ENCODE measurements at regions of chr2 and their contacts with region 1.

Region 1: DNA sequence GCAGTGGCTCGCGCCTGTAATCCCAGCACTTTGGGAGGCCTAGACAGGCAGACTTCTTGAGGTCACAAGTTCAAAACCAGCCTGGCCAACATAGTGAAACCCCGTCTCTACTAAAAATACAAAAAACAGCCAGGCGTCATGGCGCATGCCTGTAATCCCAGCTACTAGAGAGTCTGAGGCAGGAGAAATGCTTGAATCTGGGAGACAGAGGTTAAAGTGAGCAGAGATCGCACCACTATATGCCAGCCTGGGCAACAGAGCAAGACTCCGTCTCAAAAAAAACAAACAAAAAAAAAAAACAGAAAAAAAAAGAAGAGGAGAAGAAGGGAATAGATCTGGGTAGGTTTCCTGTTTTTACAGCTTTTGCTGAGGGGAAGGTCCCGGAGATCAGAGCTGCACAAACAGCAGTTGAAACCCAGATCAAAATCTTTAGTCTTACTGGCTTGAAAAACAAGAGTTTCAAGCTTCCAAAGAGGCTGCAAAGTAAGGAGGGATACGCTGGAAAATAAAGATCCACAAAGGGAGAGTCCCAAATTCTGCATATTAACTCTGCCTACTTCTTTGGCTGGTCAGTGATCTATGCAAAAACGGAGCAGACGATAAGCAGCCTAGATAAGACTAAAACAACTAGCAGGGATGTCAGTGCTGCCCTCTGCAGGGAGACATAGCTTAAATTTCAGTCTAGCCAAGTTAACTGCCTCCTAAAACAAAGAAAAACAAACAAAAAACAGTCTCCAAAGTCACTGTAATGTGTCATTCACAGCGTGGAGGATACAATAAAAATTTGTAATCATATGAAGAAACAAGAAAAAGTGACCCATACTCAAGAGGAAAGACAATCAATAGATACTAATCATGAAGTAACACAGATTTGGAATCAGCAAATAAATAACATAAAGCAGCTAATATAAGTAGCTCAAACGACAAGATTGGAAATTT is 74.1 kb downstream of the TLK1 start:
- DNase-seq: peak; percentile 47 to 71 (median 56)
- H3K4me3 ChIP-seq: peak overlapping the region in 1 of 2 donors; percentile 19
- H3K4me3 Mint-ChIP-seq: peak overlapping the region; percentile 74 to 90 (median 84)
- H3K27ac ChIP-seq: peak overlapping the region; percentile 30
- H3K27ac Mint-ChIP-seq: peak overlapping the region; percentile 80 to 95 (median 90)
- H3K4me1 ChIP-seq: peaks cover 72% of the 10 kb centered on the region
- H3K4me1 Mint-ChIP-seq: peaks cover 48 to 78% (median 65%) of the 10 kb centered on the region in 4 donors
- H3K27me3 ChIP-seq: no peaks in the 10 kb centered on the region
- H3K27me3 Mint-ChIP-seq: no peaks in the 10 kb centered on the region

Region 2: GRCh38 chr2:170991399-170992182 is 95.0 kb before region 1 on chr2:
- CTCF ChIA-PET with region 1: interaction called, 3 read pairs
- POLR2A ChIA-PET with region 1: no interaction called
- intact Hi-C with region 1: loop called (anchors 5 kb)
- DNase-seq: no peak
- H3K4me3 ChIP-seq: no peak overlapping the region
- H3K4me3 Mint-ChIP-seq: no peak overlapping the region
- H3K27ac ChIP-seq: no peak overlapping the region
- H3K27ac Mint-ChIP-seq: peak overlapping the region in 1 of 7 donors; percentile 30
- H3K4me1 ChIP-seq: no peaks in the 10 kb centered on the region
- H3K4me1 Mint-ChIP-seq: peaks cover 0 to 4% (median 2%) of the 10 kb centered on the region in 4 donors
- H3K27me3 ChIP-seq: no peaks in the 10 kb centered on the region
- H3K27me3 Mint-ChIP-seq: no peaks in the 10 kb centered on the region

Region 3: GRCh38 chr2:171042253-171042969 is 44.2 kb before region 1 on chr2:
- CTCF ChIA-PET with region 1: interaction called, 17 read pairs
- POLR2A ChIA-PET with region 1: interaction called, 3 read pairs
- intact Hi-C with region 1: loop called (anchors 2 kb)
- DNase-seq: peak in 3 of 5 donors; percentile 6 to 21 (median 10)
- H3K4me3 ChIP-seq: no peak overlapping the region
- H3K4me3 Mint-ChIP-seq: peak overlapping the region; percentile 5 to 64 (median 35)
- H3K27ac ChIP-seq: peak overlapping the region; percentile 5
- H3K27ac Mint-ChIP-seq: peak overlapping the region; percentile 16 to 92 (median 85)
- H3K4me1 ChIP-seq: peaks cover 37% of the 10 kb centered on the region
- H3K4me1 Mint-ChIP-seq: peaks cover 28 to 39% (median 31%) of the 10 kb centered on the region in 4 donors
- H3K27me3 ChIP-seq: no peaks in the 10 kb centered on the region
- H3K27me3 Mint-ChIP-seq: no peaks in the 10 kb centered on the region

Region 4: GRCh38 chr2:171136024-171136423 is 49.4 kb after region 1 on chr2:
- CTCF ChIA-PET with region 1: interaction called, 21 read pairs
- POLR2A ChIA-PET with region 1: no interaction called
- intact Hi-C with region 1: no loop called
- DNase-seq: no peak
- H3K4me3 ChIP-seq: no peak overlapping the region
- H3K4me3 Mint-ChIP-seq: peak overlapping the region in 7 of 8 donors; percentile 4 to 67 (median 44)
- H3K27ac ChIP-seq: no peak overlapping the region
- H3K27ac Mint-ChIP-seq: peak overlapping the region in 3 of 7 donors; percentile 23 to 74 (median 72)
- H3K4me1 ChIP-seq: peaks cover 75% of the 10 kb centered on the region
- H3K4me1 Mint-ChIP-seq: peaks cover 51 to 89% (median 70%) of the 10 kb centered on the region in 4 donors
- H3K27me3 ChIP-seq: no peaks in the 10 kb centered on the region
- H3K27me3 Mint-ChIP-seq: no peaks in the 10 kb centered on the region

Region 5: GRCh38 chr2:171225302-171225980 is 138.8 kb after region 1 on chr2:
- CTCF ChIA-PET with region 1: no interaction called
- POLR2A ChIA-PET with region 1: no interaction called
- intact Hi-C with region 1: no loop called
- DNase-seq: no peak
- H3K4me3 ChIP-seq: no peak overlapping the region
- H3K4me3 Mint-ChIP-seq: no peak overlapping the region
- H3K27ac ChIP-seq: no peak overlapping the region
- H3K27ac Mint-ChIP-seq: no peak overlapping the region
- H3K4me1 ChIP-seq: no peaks in the 10 kb centered on the region
- H3K4me1 Mint-ChIP-seq: no peaks in the 10 kb centered on the region
- H3K27me3 ChIP-seq: no peaks in the 10 kb centered on the region
- H3K27me3 Mint-ChIP-seq: peaks cover 0 to 2% of the 10 kb centered on the region in 2 donors

Region 6: DNA sequence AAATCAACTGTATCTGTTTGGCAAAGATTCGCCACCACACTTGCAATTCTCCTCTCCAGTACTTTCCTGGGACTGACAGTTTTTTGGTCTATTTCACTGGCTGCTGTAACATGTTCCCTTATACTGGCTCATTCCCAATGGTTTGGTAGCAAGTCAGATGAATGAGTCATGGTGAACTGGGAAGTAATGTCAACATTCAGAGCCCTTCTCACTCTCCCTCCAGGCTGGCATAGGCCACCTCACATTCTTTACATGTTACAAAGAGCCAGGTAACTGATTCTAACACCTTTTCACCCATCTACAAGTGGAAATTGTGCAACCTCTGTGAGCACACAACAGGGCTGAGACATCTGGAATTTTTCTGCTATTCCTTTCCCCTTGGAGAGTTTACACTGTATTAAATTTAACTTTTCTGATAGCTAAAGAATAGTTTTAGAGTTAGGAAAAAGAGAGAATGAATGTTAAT is 185.4 kb after region 1 on chr2:
- CTCF ChIA-PET with region 1: no interaction called
- POLR2A ChIA-PET with region 1: no interaction called
- intact Hi-C with region 1: no loop called
- DNase-seq: no peak
- H3K4me3 ChIP-seq: no peak overlapping the region
- H3K4me3 Mint-ChIP-seq: no peak overlapping the region
- H3K27ac ChIP-seq: no peak overlapping the region
- H3K27ac Mint-ChIP-seq: no peak overlapping the region
- H3K4me1 ChIP-seq: no peaks in the 10 kb centered on the region
- H3K4me1 Mint-ChIP-seq: no peaks in the 10 kb centered on the region
- H3K27me3 ChIP-seq: no peaks in the 10 kb centered on the region
- H3K27me3 Mint-ChIP-seq: no peaks in the 10 kb centered on the region

Region 7: DNA sequence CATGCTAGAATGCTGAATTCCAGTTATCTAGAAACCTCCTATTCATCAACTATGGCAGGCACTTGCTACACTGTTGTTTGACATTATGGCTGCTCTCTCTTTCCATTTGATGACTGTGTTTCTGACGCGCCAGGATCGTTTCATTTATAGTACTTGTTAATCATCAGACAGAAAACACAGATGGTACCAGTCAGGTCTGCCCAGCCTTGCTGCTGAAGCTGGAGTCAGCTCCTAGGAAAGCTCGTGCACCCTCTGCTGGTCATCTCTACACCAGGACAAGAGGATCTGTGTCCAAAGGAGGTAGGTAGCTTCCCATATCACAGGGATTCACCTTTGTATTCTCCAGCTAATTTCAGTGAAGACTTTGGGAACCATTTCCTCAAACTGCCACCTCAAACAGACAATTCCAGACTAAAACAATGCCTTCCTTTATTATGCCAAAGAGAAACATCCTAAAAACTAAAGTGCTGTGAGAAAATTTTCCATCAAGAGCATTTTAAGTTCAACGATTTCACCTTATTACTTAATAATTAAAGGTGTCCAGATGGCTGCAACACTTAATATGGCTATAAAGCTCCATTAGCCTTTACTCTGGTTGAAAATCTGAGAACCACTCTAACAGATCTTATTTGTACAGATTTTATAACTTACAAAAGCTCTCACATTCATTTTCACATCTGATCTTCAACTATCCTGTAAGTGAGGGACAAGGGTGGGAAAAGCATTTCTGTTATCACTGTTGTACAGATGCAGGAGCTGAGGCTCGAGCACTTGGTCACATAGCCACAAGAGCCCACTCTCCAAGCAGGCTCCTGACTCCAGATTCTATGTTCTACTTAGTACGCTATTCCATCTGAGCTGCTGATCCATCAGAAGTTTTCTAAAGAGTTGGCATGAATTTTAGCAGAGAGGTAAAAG is 329.6 kb after region 1 on chr2:
- CTCF ChIA-PET with region 1: interaction called, 31 read pairs
- POLR2A ChIA-PET with region 1: interaction called, 4 read pairs
- intact Hi-C with region 1: loop called (anchors 1 kb)
- DNase-seq: peak; percentile 73 to 85 (median 78)
- H3K4me3 ChIP-seq: no peak overlapping the region
- H3K4me3 Mint-ChIP-seq: peak overlapping the region in 3 of 8 donors; percentile 5 to 41 (median 10)
- H3K27ac ChIP-seq: no peak overlapping the region
- H3K27ac Mint-ChIP-seq: peak overlapping the region; percentile 19 to 92 (median 54)
- H3K4me1 ChIP-seq: peaks cover 10% of the 10 kb centered on the region
- H3K4me1 Mint-ChIP-seq: peaks cover 10 to 18% (median 11%) of the 10 kb centered on the region in 4 donors
- H3K27me3 ChIP-seq: no peaks in the 10 kb centered on the region
- H3K27me3 Mint-ChIP-seq: no peaks in the 10 kb centered on the region

Region 8: DNA sequence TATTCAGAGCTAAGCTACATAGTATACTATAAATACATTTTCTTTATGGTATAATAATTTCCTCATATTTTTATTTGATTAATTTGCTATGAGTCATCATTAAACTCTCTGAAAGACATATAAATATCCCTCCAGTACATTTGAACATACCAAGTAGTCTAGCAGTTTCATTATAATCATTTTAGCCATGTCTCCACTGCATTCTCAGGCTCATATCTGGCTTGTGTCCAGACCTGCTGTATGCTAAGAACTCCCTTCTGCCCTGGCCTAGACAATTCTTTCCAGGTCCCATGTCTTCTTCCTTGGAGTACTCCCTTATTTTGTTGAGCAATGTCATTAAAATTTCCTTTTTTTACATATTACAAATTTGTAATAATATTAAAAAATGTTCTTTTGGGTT is 584.0 kb after region 1 on chr2:
- CTCF ChIA-PET with region 1: no interaction called
- POLR2A ChIA-PET with region 1: no interaction called
- intact Hi-C with region 1: no loop called
- DNase-seq: no peak
- H3K4me3 ChIP-seq: no peak overlapping the region
- H3K4me3 Mint-ChIP-seq: no peak overlapping the region
- H3K27ac ChIP-seq: no peak overlapping the region
- H3K27ac Mint-ChIP-seq: no peak overlapping the region
- H3K4me1 ChIP-seq: no peaks in the 10 kb centered on the region
- H3K4me1 Mint-ChIP-seq: no peaks in the 10 kb centered on the region
- H3K27me3 ChIP-seq: no peaks in the 10 kb centered on the region
- H3K27me3 Mint-ChIP-seq: peaks cover 11% of the 10 kb centered on the region in 2 donors